ENCODE measurements at regions of chr10 and their contacts with region 1.

Region 1: GRCh38 chr10:52771534-52772445 is 794 bp downstream of the MBL2 start:
- DNase-seq: peak; percentile 88
- ATAC-seq: peak; percentile 24
- H3K4me3 ChIP-seq: peak overlapping the region in 2 of 3 experiments; percentile 21 to 52; a peak in 3 of 6 replicates
- H3K27ac ChIP-seq: peak overlapping the region; percentile 100
- H3K4me1 ChIP-seq: peaks cover 100% of the 10 kb centered on the region
- H3K27me3 ChIP-seq: no peaks in the 10 kb centered on the region
- CTCF ChIP-seq: no peak
- EP300 ChIP-seq: peak in 1 of 2 experiments; percentile 95; a peak in 2 of 4 replicates
- POLR2A ChIP-seq: 0 out of 4 replicates have a peak, but pooled peaks of 1 of the 2 experiments have one; percentile 21
- RAD21 ChIP-seq: no peak

Region 2: GRCh38 chr10:52740913-52741675 is 30.7 kb before region 1 on chr10:
- CTCF ChIA-PET with region 1: interaction called, 218 read pairs
- POLR2A ChIA-PET with region 1: interaction called, 29 read pairs
- in situ Hi-C with region 1: no loop called
- intact Hi-C with region 1: loop called (anchors 1 kb)
- DNase-seq: peak; percentile 66
- ATAC-seq: peak; percentile 93
- H3K4me3 ChIP-seq: no peak overlapping the region
- H3K27ac ChIP-seq: peak overlapping the region; percentile 11
- H3K4me1 ChIP-seq: peaks cover 31% of the 10 kb centered on the region
- H3K27me3 ChIP-seq: no peaks in the 10 kb centered on the region
- CTCF ChIP-seq: peak; percentile 96
- EP300 ChIP-seq: 0 out of 4 replicates have a peak, but pooled peaks of 1 of the 2 experiments have one; percentile 10
- POLR2A ChIP-seq: no peak
- RAD21 ChIP-seq: peak; percentile 98

Region 3: GRCh38 chr10:52746169-52746568 is 25.6 kb before region 1 on chr10:
- CTCF ChIA-PET with region 1: interaction called, 218 read pairs
- POLR2A ChIA-PET with region 1: interaction called, 29 read pairs
- in situ Hi-C with region 1: no loop called
- intact Hi-C with region 1: loop called (anchors 1 kb)
- DNase-seq: no peak
- ATAC-seq: peak; percentile 58; the same call in 2 of the 3 replicates
- H3K4me3 ChIP-seq: no peak overlapping the region
- H3K27ac ChIP-seq: no peak overlapping the region
- H3K4me1 ChIP-seq: peaks cover 51% of the 10 kb centered on the region
- H3K27me3 ChIP-seq: no peaks in the 10 kb centered on the region
- CTCF ChIP-seq: no peak
- EP300 ChIP-seq: no peak
- POLR2A ChIP-seq: no peak
- RAD21 ChIP-seq: no peak

Region 4: GRCh38 chr10:52755297-52756062 is 16.3 kb before region 1 on chr10:
- CTCF ChIA-PET with region 1: no interaction called
- POLR2A ChIA-PET with region 1: interaction called, 27 read pairs
- in situ Hi-C with region 1: no loop called
- intact Hi-C with region 1: loop called (anchors 1 kb)
- DNase-seq: peak; percentile 89
- ATAC-seq: peak; percentile 89
- H3K4me3 ChIP-seq: peak overlapping the region; percentile 26 to 62 (median 55)
- H3K27ac ChIP-seq: peak overlapping the region; percentile 93
- H3K4me1 ChIP-seq: peaks cover 82% of the 10 kb centered on the region
- H3K27me3 ChIP-seq: no peaks in the 10 kb centered on the region
- CTCF ChIP-seq: no peak
- EP300 ChIP-seq: peak; percentile 68 to 92; a peak in 2 of 4 replicates
- POLR2A ChIP-seq: no peak
- RAD21 ChIP-seq: no peak

Region 5: DNA sequence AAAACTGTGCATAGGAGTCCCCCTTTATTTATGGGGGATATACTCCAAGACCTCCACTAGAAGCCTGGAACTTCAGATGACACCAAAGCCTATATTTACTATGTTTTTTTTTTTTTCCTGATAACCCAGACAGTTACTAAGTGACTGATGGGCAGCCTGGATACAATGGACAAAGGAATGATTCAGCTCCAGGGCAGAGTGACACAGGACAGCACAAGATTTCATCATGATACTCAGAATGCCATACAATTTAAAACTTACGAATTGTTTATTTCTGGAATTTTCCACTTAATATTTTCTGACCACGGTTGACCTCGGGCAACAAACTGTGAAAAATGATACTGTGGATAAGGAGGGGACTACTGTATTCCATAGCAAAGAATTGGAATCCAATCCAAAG is 1185.6 kb after region 1 on chr10:
- CTCF ChIA-PET with region 1: no interaction called
- POLR2A ChIA-PET with region 1: no interaction called
- in situ Hi-C with region 1: no loop called
- intact Hi-C with region 1: loop called (anchors 10 kb)
- DNase-seq: peak; percentile 90
- ATAC-seq: peak; percentile 99
- H3K4me3 ChIP-seq: peak overlapping the region in 1 of 3 experiments; percentile 1; a peak in 1 of 6 replicates
- H3K27ac ChIP-seq: peak overlapping the region; percentile 75
- H3K4me1 ChIP-seq: peaks cover 64% of the 10 kb centered on the region
- H3K27me3 ChIP-seq: no peaks in the 10 kb centered on the region
- CTCF ChIP-seq: no peak
- EP300 ChIP-seq: peak in 1 of 2 experiments; percentile 74; a peak in 1 of 4 replicates
- POLR2A ChIP-seq: no peak
- RAD21 ChIP-seq: no peak

Measured in HepG2 (cell line).